ENCODE measurements at regions of chr7 and their contacts with region 1.

Region 1: GRCh38 chr7:87797798-87798403 is 78.3 kb downstream of the SLC25A40 start:
- DNase-seq: no peak
- ATAC-seq: peak in 1 of 2 donors; percentile 47

Region 2: DNA sequence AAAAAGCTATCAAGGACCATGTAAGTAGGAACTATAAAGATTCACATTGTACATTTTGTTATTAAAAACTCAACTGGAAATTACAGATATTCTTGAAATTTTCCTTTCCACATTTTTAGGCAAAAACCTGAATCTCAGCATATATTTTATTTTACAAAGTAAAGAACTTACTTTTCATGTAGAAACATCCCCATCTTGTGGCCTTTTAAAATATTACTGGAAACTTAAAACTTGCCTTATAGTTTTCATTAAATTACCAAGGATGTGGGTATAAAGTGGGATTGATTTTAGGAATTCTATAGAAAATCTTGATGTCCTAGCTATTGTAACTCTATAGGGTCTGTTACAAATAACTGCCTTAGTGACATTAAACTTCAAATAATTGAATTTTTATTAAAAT is 89.0 kb after region 1 on chr7:
- intact Hi-C with region 1: loop called in 1 of 2 experiments (anchors 5 kb)
- DNase-seq: no peak
- ATAC-seq: no peak

Region 3: DNA sequence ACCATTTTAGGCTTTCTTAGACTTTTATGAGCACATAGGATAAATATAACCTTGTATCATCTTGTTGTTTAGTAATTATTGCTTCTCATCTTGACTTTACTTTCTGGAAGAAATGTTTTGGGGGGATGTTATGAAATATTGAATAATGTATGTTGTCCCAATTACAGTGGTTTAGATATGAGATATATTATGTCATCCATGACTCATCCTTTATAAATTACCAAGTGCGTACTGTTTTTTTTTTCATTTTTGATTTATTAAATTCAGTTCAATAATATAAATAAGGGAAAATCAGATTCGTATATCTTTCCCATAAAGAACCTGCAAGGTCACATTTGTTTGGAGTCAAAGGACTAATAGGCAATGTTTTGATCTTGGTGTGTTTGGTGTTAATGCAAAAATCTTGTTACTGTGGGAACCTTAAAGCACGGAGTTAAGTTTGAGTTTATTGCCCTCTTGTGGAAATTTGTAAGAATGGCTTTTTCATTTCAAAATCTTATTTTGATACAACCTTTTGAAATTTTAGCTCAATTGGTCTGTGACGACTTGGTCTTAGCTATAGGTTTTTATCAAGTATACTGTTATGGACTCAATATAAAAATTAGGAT is 313.3 kb after region 1 on chr7:
- intact Hi-C with region 1: loop called in 1 of 2 experiments (anchors 5 kb)
- DNase-seq: no peak
- ATAC-seq: peak; percentile 31 to 61

Measured in left cardiac atrium (tissue), 4 donors.